Activated CD4-positive, alpha-beta T cell treated with anti-CD3 and anti-CD28 coated beads, Interleukin-2, amount 10 ng/mL, durations not matched to agents 24 days and 14 days (primary cell): ENCODE measurements at regions of chr5 and their contacts with region 1.

Region 1: GRCh38 chr5:72847989-72848473 is 31.6 kb downstream of the TNPO1 start:
- DNase-seq: peak; percentile 95
- H3K4me3 Mint-ChIP-seq: peak overlapping the region; percentile 99
- H3K27ac Mint-ChIP-seq: peak overlapping the region; percentile 99
- H3K4me1 Mint-ChIP-seq: peaks cover 29% of the 10 kb centered on the region
- H3K27me3 Mint-ChIP-seq: peaks cover 18% of the 10 kb centered on the region

Region 2: GRCh38 chr5:72835730-72836151 is 12.3 kb before region 1 on chr5:
- intact Hi-C with region 1: no loop called
- DNase-seq: no peak
- H3K4me3 Mint-ChIP-seq: no peak overlapping the region
- H3K27ac Mint-ChIP-seq: no peak overlapping the region
- H3K4me1 Mint-ChIP-seq: no peaks in the 10 kb centered on the region
- H3K27me3 Mint-ChIP-seq: peaks cover 30% of the 10 kb centered on the region

Region 3: DNA sequence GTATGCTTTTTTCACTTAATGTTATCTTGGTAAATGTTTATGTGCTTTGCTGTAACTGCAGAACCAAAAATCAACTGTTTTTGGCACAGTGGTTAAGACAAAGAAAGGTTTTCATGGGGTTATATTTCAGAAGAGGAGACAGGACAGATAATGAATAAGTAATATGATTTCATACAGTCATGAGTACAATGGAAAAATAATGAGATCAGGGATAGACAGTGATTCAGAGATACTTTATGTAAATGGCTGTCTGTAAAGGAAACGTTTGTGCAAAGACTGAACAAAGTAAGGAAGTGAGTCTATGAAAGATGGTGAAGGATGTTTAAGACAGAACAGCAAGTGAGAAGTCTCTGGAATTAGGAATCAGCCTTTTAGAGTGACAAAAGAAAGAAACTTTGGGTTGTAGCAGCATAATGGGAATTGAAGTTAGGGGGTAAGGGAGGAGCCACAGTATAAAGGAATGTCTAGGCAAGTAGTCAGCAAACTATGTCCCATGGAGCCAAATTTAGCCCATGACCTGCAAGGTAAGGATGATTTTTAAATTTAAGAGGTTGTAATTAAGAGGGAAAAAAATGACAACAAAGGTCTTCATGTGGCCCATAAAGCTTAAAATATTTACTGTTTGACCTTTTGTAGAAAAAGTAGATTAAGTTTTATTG is 23.5 kb after region 1 on chr5:
- intact Hi-C with region 1: loop called (anchors 2 kb)
- DNase-seq: no peak
- H3K4me3 Mint-ChIP-seq: no peak overlapping the region
- H3K27ac Mint-ChIP-seq: peak overlapping the region; percentile 90
- H3K4me1 Mint-ChIP-seq: peaks cover 10% of the 10 kb centered on the region
- H3K27me3 Mint-ChIP-seq: no peaks in the 10 kb centered on the region

Region 4: GRCh38 chr5:72895758-72896157 is 47.7 kb after region 1 on chr5:
- intact Hi-C with region 1: loop called (anchors 2 kb)
- DNase-seq: no peak
- H3K4me3 Mint-ChIP-seq: peak overlapping the region; percentile 0
- H3K27ac Mint-ChIP-seq: peak overlapping the region; percentile 43
- H3K4me1 Mint-ChIP-seq: peaks cover 18% of the 10 kb centered on the region
- H3K27me3 Mint-ChIP-seq: no peaks in the 10 kb centered on the region